GM18951 (cell line): ENCODE measurements at regions of chr4 and their contacts with region 1.

Region 1: GRCh38 chr4:40722576-40723161 is 27.1 kb upstream of the NSUN7 start:
- POLR2A ChIP-seq: no peak

Region 2: DNA sequence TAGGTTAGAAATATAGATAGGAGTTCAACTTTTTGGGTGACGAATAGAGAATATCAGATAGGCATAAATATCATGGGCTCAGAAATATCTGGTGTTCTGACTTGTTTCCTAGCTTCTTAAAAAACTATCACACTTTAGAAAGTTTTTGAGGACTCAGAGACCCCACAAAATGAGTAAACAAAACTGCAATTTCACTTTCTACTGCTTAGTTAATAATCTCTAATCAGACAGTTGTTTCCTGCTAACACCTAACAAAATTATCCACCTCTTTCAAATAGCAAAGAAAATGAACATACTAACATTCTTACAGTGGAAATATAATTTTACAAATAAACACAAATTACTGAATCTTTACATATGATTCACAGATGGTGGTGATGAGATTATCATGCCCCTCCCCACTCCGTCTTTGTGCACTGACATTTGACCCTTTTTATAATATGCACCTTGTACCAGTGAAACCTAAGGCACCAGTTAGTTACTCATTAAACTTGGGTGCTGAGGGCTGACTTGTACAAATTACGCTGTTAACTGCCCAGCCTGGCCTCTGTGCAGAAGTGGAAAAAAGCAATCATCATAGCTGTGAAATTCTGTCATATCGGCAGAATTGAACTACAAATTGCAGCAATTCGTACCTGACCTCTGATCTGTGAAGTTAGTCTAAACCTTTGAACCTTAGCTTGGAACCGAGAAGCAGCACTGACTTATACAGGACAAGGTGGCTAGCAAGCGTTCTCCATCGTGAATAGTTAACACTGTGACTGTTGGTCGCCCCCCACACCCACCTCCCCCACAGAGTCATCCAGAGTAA is 248.9 kb before region 1 on chr4:
- in situ Hi-C with region 1: no loop called
- POLR2A ChIP-seq: no peak

Region 3: DNA sequence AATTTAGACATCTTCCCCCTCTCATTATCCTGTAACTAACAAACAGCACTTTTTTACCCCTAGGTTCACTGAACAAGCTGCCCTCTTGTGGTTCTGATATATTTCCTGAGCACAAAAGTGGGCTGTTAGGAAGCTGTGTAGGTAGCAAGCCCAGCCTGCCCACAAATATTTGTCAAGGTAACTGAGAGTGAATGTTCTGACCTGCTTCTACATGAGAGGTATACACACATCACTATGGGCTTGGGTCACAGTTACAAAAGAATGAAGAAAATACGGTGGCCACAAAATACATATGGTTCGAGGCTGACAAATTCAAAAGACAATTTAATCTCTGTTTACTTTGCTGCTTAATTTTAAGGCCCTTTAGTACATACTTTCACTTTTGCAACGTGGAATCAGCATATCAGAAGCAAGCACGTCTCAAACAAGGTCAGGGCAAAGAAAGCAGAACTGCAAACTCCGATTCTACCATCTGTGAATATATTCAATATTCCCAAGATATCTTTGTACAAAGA is 171.7 kb before region 1 on chr4:
- in situ Hi-C with region 1: loop called (anchors 10 kb)
- POLR2A ChIP-seq: no peak

Region 4: DNA sequence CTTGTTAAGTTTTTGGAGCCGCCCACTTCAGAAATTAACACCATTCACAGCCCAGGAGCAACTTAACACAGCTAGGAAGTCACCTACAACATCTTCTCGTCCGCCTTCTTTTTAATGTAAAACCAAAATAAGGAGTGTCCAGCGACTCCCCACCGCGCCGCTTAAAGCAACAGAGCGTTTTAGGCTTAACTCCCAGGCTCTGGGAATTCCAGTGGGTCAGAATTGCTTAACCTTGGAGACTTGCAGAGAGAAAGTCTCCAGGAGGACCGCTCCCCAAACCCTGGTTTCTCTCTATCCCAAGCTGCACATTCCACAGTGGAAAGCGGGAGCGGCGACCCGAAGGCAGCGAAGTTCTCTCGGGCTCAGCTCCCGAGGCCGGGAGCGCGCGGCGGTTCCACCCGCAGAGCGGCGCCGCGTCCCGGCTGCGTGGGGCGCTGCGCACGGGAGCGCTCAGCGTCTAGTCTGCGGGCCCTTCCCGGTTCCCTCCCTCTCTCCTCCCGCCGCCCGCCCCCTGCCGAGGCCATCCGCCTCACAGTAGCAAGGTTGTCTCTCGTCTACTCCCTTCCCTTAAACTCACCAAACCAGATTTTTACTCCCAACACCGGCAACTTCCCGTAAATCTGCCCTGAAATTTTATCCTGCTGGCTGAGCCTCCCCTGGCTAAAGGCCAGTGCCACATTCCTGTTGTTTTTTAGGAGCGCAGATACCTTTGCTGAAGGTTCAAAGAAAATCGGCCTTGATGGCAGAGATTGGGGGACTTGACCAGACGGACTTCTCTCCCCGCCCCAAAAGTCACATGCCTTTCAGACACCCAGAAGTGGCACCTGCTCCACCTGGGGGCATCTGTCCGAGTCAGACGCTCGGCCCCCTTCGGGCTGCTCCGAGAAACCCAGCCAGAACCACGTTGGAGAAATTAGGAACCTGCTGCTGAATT is 93.0 kb before region 1 on chr4 and contains the start of gene RBM47:
- in situ Hi-C with region 1: loop called (anchors 5 kb)
- POLR2A ChIP-seq: peak; percentile 52

Region 5: DNA sequence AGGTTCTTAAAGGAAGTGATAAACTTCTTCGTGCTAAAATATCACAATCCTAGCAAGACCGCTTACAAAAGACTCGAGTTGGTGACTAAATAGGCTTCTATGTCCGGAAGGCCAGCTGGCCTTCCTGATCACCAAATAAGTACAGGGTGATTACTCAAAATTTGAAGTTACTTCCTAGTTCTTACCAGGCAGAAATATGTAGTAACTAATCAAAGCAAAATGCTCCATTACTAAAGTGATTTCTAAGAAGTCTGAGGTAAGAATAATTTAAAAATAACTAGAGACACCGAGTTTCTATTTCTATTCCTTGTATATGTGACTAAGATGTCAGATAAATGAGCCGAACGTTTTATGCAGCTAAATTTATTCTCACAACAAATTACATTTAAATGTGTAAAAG is 89.3 kb after region 1 on chr4:
- in situ Hi-C with region 1: no loop called
- POLR2A ChIP-seq: no peak

Region 6: DNA sequence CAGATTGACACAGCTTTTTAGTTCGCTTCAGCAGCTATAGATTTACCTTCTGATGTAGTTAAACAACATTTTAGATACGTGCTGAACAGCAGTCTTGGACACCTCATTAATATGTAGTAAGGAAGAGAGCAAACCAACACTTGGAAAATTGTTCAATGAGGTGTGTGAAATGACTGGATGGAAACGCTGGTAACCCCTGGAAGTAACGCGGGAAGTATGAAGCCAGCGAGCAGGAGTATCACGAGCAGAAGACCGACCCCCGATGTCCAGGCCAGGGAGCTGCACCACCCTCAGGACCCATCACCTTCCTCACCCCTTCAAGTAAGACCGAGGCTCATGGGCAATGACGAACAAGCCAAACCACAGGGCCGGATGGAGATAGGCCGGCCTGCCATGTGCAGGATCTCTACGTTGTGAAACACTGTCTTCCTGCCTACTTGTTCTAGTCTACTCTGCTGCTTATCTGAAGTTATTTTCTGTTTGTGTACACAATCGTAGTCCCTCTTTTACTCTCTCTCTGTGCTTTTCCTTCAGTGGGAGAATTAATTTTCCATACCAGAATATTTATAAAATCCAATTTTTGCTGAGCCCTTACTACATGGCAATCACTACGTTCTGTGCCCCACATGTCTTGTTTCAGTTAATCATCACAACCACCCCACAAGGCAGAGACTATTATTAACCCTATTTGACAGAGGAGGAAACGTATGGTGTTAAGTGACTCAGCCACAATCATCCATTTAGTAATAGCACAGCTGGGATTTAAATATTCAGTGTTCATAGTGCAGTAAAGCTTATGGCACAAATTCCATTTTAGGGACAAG is 270.0 kb after region 1 on chr4:
- in situ Hi-C with region 1: no loop called
- POLR2A ChIP-seq: no peak